Heart right ventricle (tissue), 16 donors: ENCODE measurements at regions of chr20 and their contacts with region 1.

Region 1: GRCh38 chr20:43448748-43449535 is 8.8 kb upstream of the SRSF6 start:
- DNase-seq: no peak
- ATAC-seq: peak in 7 of 8 donors; percentile 35 to 79 (median 64)
- H3K4me3 ChIP-seq: no peak overlapping the region
- H3K27ac ChIP-seq: no peak overlapping the region
- H3K4me1 ChIP-seq: peaks cover 0 to 8% (median 0%) of the 10 kb centered on the region in 9 donors
- H3K27me3 ChIP-seq: peaks cover 0 to 25% (median 13%) of the 10 kb centered on the region in 7 donors
- CTCF ChIP-seq: peak; percentile 36 to 70 (median 63)

Region 2: GRCh38 chr20:43229696-43230095 is 219.2 kb before region 1 on chr20:
- intact Hi-C with region 1: no loop called
- DNase-seq: no peak
- ATAC-seq: no peak
- H3K4me3 ChIP-seq: no peak overlapping the region
- H3K27ac ChIP-seq: no peak overlapping the region
- H3K4me1 ChIP-seq: no peaks in the 10 kb centered on the region
- H3K27me3 ChIP-seq: peaks cover 0 to 42% (median 15%) of the 10 kb centered on the region in 7 donors
- CTCF ChIP-seq: no peak

Region 3: DNA sequence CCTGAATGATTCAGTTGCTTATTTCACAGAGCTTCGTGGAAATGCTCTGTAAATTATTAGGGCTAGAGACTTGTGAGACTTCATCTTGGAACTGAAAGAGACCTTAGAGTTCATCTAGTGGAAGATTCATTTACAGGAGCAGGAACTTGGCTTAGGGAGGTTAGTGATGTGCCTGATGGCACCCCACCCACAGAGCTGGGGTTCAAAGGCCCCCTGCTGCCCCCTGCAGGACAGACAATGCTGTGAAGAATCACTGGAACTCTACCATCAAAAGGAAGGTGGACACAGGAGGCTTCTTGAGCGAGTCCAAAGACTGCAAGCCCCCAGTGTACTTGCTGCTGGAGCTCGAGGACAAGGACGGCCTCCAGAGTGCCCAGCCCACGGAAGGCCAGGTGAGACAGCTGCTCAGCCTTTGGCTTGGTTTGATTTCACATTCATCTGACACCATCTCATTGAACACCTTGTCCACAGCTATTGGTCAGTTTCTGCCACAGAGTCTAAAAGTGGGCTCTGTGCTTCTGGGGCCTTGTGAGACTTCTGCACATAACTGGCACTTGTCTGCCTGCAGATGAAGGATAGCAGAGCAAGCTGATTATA is 243.1 kb after region 1 on chr20:
- intact Hi-C with region 1: loop called in 1 of 10 experiments (anchors 5 kb)
- DNase-seq: no peak
- ATAC-seq: no peak
- H3K4me3 ChIP-seq: no peak overlapping the region
- H3K27ac ChIP-seq: no peak overlapping the region
- H3K4me1 ChIP-seq: no peaks in the 10 kb centered on the region
- H3K27me3 ChIP-seq: no peaks in the 10 kb centered on the region
- CTCF ChIP-seq: peak in 7 of 9 donors; percentile 33 to 62 (median 41)

Region 4: GRCh38 chr20:43749734-43750294 is 300.9 kb after region 1 on chr20:
- intact Hi-C with region 1: loop called in 1 of 10 experiments (anchors 10 kb)
- DNase-seq: peak; percentile 65 to 84
- ATAC-seq: peak; percentile 62 to 87 (median 84)
- H3K4me3 ChIP-seq: no peak overlapping the region
- H3K27ac ChIP-seq: no peak overlapping the region
- H3K4me1 ChIP-seq: peaks cover 0 to 52% (median 0%) of the 10 kb centered on the region in 9 donors
- H3K27me3 ChIP-seq: peaks cover 0 to 46% (median 19%) of the 10 kb centered on the region in 7 donors
- CTCF ChIP-seq: peak; percentile 99 to 100 (median 99)